MCF 10A (cell line): ENCODE measurements at regions of chr6 and their contacts with region 1.

Region 1: DNA sequence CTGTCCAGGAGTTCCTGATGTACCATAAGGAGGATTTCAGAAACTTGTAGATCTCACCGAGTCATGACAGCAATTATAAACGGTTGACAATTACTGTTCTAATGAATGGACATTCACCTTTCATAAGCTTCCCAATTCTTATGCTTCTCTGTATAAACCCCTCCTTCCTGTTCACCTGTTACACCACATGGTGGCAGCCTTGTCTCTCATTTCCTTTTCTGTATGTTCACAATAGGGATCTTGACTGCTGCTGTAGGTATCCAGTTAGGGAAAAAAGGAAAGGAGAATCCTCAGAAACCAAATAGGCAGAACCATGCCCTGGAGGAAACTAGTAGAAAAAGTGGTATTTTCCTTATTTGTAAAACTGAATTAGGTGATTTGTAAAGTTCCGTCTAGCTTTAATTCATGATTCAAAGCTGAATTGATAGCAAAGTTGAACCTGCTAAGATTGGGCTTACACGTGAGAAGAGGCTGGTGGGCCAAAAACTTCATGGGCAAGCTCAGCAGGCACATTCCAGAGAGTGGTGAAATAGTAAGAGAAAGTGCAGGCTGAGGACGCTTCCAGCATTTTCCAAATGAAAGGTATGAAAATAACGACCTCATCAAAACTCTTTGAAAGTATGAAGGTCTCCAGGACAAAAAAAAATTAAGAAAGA is 29.0 kb upstream of the TBPL1 start:
- DNase-seq: peak; percentile 85
- H3K4me3 Mint-ChIP-seq: no peak overlapping the region
- H3K27ac Mint-ChIP-seq: no peak overlapping the region
- H3K4me1 Mint-ChIP-seq: peaks cover 4% of the 10 kb centered on the region
- H3K27me3 Mint-ChIP-seq: peaks cover 16% of the 10 kb centered on the region
- CTCF ChIP-seq: peak; percentile 77

Region 2: GRCh38 chr6:132830334-132830751 is 1093.7 kb before region 1 on chr6:
- CTCF ChIA-PET with region 1: interaction called, 5 read pairs
- POLR2A ChIA-PET with region 1: no interaction called
- intact Hi-C with region 1: loop called (anchors 5 kb)
- DNase-seq: peak; percentile 45
- H3K4me3 Mint-ChIP-seq: no peak overlapping the region
- H3K27ac Mint-ChIP-seq: no peak overlapping the region
- H3K4me1 Mint-ChIP-seq: no peaks in the 10 kb centered on the region
- H3K27me3 Mint-ChIP-seq: peaks cover 19% of the 10 kb centered on the region
- CTCF ChIP-seq: peak; percentile 41

Region 3: DNA sequence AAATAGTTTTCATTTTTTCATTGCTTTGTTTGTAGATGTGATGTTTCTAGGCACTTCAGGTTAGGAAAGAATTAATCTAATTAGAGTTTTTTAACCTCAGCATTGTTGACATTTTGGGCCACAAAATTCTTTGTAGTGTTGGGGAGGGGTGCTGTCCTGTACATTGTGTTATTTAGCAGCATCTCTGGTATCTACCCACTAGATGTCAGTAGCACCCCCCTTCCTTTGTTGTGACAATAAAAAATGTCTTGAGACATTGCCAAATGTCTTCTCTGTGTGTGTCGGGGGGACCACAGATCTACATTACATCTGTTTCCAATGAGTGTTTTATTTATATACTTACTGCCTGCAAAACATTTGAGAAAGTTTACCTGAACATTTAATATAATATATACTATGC is 637.3 kb before region 1 on chr6:
- CTCF ChIA-PET with region 1: no interaction called
- POLR2A ChIA-PET with region 1: no interaction called
- intact Hi-C with region 1: loop called (anchors 5 kb)
- DNase-seq: peak; percentile 30
- H3K4me3 Mint-ChIP-seq: no peak overlapping the region
- H3K27ac Mint-ChIP-seq: no peak overlapping the region
- H3K4me1 Mint-ChIP-seq: no peaks in the 10 kb centered on the region
- H3K27me3 Mint-ChIP-seq: peaks cover 70% of the 10 kb centered on the region
- CTCF ChIP-seq: peak; percentile 17

Region 4: GRCh38 chr6:133568970-133569889 is 354.8 kb before region 1 on chr6:
- CTCF ChIA-PET with region 1: interaction called, 236 read pairs
- POLR2A ChIA-PET with region 1: interaction called, 8 read pairs
- intact Hi-C with region 1: loop called (anchors 1 kb)
- DNase-seq: peak; percentile 97
- H3K4me3 Mint-ChIP-seq: peak overlapping the region; percentile 71
- H3K27ac Mint-ChIP-seq: peak overlapping the region; percentile 93
- H3K4me1 Mint-ChIP-seq: peaks cover 16% of the 10 kb centered on the region
- H3K27me3 Mint-ChIP-seq: no peaks in the 10 kb centered on the region
- CTCF ChIP-seq: peak; percentile 85

Region 5: DNA sequence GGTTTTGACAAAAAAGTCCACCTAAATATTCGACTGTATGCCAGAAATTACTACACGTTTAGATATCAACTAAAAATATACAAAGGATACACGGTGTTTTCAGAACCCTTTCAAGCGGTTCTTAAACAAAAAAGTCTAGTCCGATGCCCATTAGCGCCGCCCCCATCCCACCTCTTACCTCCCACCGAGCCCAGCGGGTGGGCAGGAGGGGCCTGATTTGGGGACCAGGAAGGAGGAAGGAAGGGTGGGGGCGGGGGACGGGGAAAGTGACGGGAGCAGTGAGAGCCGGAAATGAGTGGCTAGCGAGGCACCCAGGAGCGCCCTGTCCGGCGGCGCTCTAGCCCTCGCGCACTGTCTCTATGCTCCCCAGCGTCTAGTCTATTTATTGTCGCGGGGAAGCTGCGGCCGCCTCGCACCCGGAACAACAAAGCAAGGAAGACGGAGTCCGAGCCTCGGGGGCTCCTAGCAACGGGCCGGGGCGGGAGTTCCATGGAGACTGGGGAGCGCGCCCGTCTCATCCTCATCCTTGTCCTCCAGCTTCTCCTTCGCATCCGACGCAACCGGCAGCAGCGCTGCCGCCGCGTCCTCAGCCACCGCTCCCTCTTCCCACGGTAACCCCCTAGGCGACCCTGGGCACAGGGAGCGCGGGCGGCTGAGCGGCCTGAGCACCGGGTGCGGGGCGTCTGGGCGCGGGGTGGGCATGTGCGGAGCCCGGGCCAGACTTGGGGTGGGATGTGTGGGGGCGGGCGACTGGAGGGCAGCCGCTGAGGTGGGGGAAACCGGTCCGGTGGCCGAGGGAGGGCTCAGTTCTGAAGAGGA is 29.0 kb after region 1 on chr6 and contains the start of gene TBPL1:
- CTCF ChIA-PET with region 1: interaction called, 29 read pairs
- POLR2A ChIA-PET with region 1: interaction called, 4 read pairs
- intact Hi-C with region 1: no loop called
- DNase-seq: peak; percentile 95
- H3K4me3 Mint-ChIP-seq: peak within 1 kb of the TSS; percentile 94
- H3K27ac Mint-ChIP-seq: peak within 1 kb of the TSS; percentile 88
- H3K4me1 Mint-ChIP-seq: peaks cover 36% of the 10 kb centered on the region
- H3K27me3 Mint-ChIP-seq: no peaks in the 10 kb centered on the region
- CTCF ChIP-seq: no peak
- total RNA-seq, gene TBPL1: 40.9 and 51.8 TPM in 2 replicates

Region 6: DNA sequence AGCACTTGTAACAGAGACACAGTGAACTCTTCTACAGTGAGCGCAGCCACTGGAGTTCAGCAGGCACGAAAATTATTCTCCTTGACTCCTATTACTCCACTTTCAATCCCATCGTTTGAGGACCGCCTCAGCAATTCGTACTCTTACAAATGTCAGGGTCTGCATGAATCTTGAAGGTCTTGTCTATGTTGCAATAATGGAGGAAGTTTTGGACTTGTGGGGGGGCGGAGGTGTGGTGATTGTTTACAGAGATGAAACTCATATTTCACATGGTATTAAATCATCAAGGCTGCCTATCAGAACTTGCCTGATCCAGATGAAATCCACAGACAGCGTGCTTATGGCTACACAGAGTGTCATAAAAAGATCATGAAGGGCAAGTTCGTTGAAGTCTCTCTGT is 86.3 kb after region 1 on chr6:
- CTCF ChIA-PET with region 1: no interaction called
- POLR2A ChIA-PET with region 1: no interaction called
- intact Hi-C with region 1: no loop called
- DNase-seq: no peak
- H3K4me3 Mint-ChIP-seq: no peak overlapping the region
- H3K27ac Mint-ChIP-seq: no peak overlapping the region
- H3K4me1 Mint-ChIP-seq: peaks cover 9% of the 10 kb centered on the region
- H3K27me3 Mint-ChIP-seq: no peaks in the 10 kb centered on the region
- CTCF ChIP-seq: no peak

Region 7: GRCh38 chr6:134063966-134064445 is 139.9 kb after region 1 on chr6:
- CTCF ChIA-PET with region 1: interaction called, 133 read pairs
- POLR2A ChIA-PET with region 1: no interaction called
- intact Hi-C with region 1: loop called (anchors 1 kb)
- DNase-seq: peak; percentile 73
- H3K4me3 Mint-ChIP-seq: no peak overlapping the region
- H3K27ac Mint-ChIP-seq: no peak overlapping the region
- H3K4me1 Mint-ChIP-seq: peaks cover 11% of the 10 kb centered on the region
- H3K27me3 Mint-ChIP-seq: no peaks in the 10 kb centered on the region
- CTCF ChIP-seq: peak; percentile 84

Region 8: DNA sequence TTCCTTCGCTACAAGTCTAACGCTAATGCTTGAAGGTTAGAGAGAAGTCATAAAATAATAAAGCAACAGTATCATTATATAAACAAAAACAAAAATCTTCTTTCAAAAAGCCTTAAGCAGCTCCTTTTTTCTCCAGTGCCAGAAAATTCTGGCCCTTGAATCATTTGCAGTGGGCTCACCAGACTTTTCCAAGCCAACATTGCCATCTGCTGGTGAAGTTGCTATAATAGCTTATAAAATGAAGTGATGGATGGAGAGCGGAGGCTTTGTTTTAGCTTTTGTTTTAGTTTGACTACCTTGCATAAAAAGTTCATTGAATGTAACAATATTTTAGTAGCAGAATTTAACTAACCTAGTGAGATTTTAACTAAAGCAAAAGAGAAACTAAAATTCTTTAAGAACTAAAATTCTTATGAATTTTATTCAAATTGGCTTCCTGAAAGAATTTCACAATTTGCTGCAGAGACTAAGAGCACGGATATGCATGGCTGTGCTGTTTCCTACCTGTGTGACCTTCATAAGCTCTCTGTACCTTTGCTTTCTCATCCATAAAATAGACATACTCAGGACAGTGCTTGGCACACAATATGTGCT is 173.1 kb after region 1 on chr6:
- CTCF ChIA-PET with region 1: interaction called, 456 read pairs
- POLR2A ChIA-PET with region 1: interaction called, 34 read pairs
- intact Hi-C with region 1: loop called (anchors 1 kb)
- DNase-seq: peak; percentile 83
- H3K4me3 Mint-ChIP-seq: no peak overlapping the region
- H3K27ac Mint-ChIP-seq: no peak overlapping the region
- H3K4me1 Mint-ChIP-seq: no peaks in the 10 kb centered on the region
- H3K27me3 Mint-ChIP-seq: peaks cover 13% of the 10 kb centered on the region
- CTCF ChIP-seq: peak; percentile 61